MCF 10A (cell line): ENCODE measurements at regions of chr6 and their contacts with region 1.

Region 1: DNA sequence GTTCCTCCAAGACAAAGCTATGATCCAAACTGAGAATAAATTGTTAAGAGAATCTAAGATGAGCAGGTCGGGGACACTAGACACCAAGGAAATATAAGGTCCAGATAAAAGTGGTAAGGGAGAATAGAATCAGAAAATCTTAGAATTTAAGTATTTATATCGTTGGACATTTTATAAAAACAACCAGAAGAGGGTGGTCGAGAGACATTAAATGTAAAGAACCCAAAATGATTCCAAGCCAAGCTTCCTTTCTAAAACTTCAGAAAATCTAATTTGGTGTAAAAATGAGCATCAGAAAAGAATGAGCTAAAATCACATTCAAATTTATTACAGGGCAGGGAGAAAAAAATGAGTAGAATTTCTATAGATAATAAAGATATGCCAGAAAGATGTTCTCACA is 97.8 kb upstream of the OGFRL1 start:
- DNase-seq: peak; percentile 51
- H3K4me3 Mint-ChIP-seq: no peak overlapping the region
- H3K27ac Mint-ChIP-seq: no peak overlapping the region
- H3K4me1 Mint-ChIP-seq: no peaks in the 10 kb centered on the region
- H3K27me3 Mint-ChIP-seq: no peaks in the 10 kb centered on the region
- CTCF ChIP-seq: peak; percentile 36

Region 2: GRCh38 chr6:71288228-71289001 is 97.6 kb after region 1 on chr6 and contains the start of gene OGFRL1:
- CTCF ChIA-PET with region 1: interaction called, 17 read pairs
- POLR2A ChIA-PET with region 1: interaction called, 12 read pairs
- intact Hi-C with region 1: loop called (anchors 5 kb)
- DNase-seq: peak; percentile 72
- H3K4me3 Mint-ChIP-seq: peak within 1 kb of the TSS; percentile 78
- H3K27ac Mint-ChIP-seq: peak within 1 kb of the TSS; percentile 11
- H3K4me1 Mint-ChIP-seq: peaks cover 29% of the 10 kb centered on the region
- H3K27me3 Mint-ChIP-seq: no peaks in the 10 kb centered on the region
- CTCF ChIP-seq: no peak
- total RNA-seq, gene OGFRL1: 37.7 and 70.8 TPM in 2 replicates

Region 3: DNA sequence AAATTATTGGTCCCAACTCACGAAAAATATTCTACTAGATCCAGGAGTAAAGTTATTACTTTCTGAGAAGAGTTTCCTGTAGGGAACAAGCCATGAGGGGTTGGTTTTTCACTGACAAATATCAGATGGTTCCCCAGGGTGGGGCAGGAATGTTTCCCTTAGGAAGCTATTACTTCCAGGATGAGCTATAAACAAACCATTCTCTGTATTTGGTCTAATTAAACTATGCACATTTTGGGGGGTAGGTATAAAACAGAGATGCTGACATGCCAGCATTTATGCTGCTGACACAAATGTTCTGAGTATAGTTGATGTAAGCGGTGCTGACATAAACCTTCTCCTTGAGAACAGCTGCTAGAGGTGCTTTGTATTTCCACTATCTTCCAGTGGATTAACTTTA is 152.0 kb after region 1 on chr6:
- CTCF ChIA-PET with region 1: interaction called, 23 read pairs
- POLR2A ChIA-PET with region 1: interaction called, 3 read pairs
- intact Hi-C with region 1: no loop called
- DNase-seq: no peak
- H3K4me3 Mint-ChIP-seq: no peak overlapping the region
- H3K27ac Mint-ChIP-seq: no peak overlapping the region
- H3K4me1 Mint-ChIP-seq: no peaks in the 10 kb centered on the region
- H3K27me3 Mint-ChIP-seq: no peaks in the 10 kb centered on the region
- CTCF ChIP-seq: no peak

Region 4: DNA sequence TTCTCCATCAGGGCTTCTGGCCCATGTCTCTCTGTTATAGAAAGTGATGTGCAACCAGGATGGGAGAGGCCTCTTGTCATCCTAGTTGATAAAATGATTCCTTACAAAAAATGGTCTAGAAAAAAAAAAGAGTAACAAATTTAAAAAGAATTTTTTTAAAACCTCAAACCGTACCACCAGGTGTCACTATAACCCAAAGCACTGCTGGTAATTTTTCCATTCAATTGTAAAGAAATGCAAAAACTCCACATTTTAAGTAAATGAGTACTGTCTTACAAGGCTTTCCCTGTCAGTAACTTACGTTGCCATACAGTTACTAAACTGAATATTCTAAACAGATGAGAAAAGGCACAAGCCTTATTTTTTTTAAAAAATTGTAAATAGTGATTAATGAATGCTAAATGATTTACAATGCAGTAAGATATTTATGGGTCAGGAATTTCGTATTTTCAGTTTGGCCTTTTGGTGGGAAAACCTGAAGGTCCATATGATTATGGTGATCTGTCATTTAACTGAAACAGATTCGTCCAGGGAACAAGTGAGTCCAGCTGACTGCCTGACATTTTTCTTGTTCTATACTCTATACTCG is 193.2 kb after region 1 on chr6:
- CTCF ChIA-PET with region 1: interaction called, 6 read pairs
- POLR2A ChIA-PET with region 1: no interaction called
- intact Hi-C with region 1: loop called (anchors 1 kb)
- DNase-seq: peak; percentile 56
- H3K4me3 Mint-ChIP-seq: no peak overlapping the region
- H3K27ac Mint-ChIP-seq: no peak overlapping the region
- H3K4me1 Mint-ChIP-seq: peaks cover 14% of the 10 kb centered on the region
- H3K27me3 Mint-ChIP-seq: no peaks in the 10 kb centered on the region
- CTCF ChIP-seq: peak; percentile 45